AG04449 (cell line): ENCODE measurements at regions of chr6 and their contacts with region 1.

Region 1: DNA sequence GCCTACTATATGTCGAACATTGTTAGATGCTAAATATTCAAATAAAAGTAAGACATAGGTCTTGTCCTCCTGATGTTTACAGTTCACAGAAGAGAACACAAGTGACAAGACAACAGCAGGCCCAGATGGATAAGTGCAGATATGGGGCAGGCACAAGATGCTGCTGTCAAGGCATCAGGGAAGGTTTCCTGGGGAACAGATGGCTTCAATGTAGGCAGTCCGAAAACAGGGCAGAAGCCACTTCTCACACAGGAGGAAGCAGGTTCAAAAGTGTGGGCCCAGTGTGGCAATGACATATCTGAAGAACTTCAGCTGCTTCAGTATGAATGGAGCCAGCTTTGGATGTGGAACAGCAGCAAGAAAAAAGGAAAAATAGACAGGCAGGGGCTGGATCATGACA is 32.5 kb downstream of the HLA-DPB1 start:
- DNase-seq: no peak
- H3K4me3 ChIP-seq: no peak overlapping the region
- CTCF ChIP-seq: no peak

Region 2: DNA sequence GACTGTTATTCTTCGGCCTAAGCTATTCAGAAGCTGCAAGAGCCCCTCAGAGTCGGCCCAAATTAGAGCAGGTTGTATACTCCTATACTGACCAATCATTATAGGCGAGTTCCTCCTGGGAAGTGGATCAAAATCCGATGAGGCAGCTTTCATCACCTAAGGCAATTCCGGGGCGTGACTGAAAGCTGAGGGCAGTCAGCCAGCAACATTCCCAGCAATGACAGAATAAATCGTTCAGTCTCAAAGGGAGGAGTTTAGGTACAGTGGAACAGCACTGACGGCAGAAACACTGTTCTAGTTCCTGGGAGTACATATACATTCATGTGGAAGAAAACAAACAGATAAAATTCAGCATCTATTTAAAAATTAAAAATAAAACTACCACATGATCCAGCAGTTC is 355.7 kb before region 1 on chr6:
- CTCF ChIA-PET with region 1: no interaction called
- POLR2A ChIA-PET with region 1: no interaction called
- DNase-seq: no peak
- H3K4me3 ChIP-seq: no peak overlapping the region
- CTCF ChIP-seq: no peak

Region 3: GRCh38 chr6:33118525-33119123 is 10.3 kb after region 1 on chr6:
- CTCF ChIA-PET with region 1: interaction called, 12 read pairs
- POLR2A ChIA-PET with region 1: no interaction called
- DNase-seq: no peak
- H3K4me3 ChIP-seq: no peak overlapping the region
- CTCF ChIP-seq: peak; percentile 56